A549 (cell line): ENCODE measurements at regions of chr3 and their contacts with region 1.

Region 1: GRCh38 chr3:119145500-119146191 is at the start of gene TEX55:
- DNase-seq: peak; percentile 54 to 77
- ATAC-seq: peak; percentile 86 to 90
- H3K4me3 ChIP-seq: no peak within 1 kb of the TSS
- H3K27ac ChIP-seq: peak within 1 kb of the TSS; percentile 63 to 75
- H3K4me1 ChIP-seq: peaks cover 33% of the 10 kb centered on the region
- CTCF ChIP-seq: peak; percentile 63
- EP300 ChIP-seq: no peak
- POLR2A ChIP-seq: no peak
- RAD21 ChIP-seq: peak; percentile 78 to 82
- polyA plus RNA-seq, gene TEX55: 0.08 TPM in 1 of 2 replicates, not detected in the other

Region 2: DNA sequence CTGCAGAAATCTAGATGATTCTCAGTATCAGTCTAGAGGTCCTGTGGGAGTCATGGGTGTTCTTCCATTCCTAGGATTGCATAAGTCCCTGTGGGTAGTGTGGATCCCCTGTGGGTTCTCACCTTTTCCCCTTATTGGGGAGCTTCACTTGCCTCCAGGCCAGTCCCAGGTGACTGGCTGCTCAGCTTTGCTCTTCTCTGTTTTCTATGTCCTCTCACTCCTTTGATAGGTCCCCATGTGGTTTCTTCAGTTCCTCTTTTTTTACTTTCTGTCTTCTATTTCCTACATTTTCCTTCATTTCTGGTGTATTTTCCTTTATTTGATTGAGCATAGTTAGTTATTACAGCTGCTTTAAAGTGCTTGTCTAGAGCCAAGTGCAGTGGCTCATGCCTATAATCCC is 11.2 kb after region 1 on chr3:
- CTCF ChIA-PET with region 1: interaction called, 12 read pairs
- POLR2A ChIA-PET with region 1: no interaction called
- DNase-seq: no peak
- ATAC-seq: no peak
- H3K4me3 ChIP-seq: no peak overlapping the region
- H3K27ac ChIP-seq: no peak overlapping the region
- H3K4me1 ChIP-seq: peaks cover 7% of the 10 kb centered on the region; the same call in 1 of the 3 replicates
- CTCF ChIP-seq: no peak
- EP300 ChIP-seq: no peak
- POLR2A ChIP-seq: no peak
- RAD21 ChIP-seq: no peak

Region 3: DNA sequence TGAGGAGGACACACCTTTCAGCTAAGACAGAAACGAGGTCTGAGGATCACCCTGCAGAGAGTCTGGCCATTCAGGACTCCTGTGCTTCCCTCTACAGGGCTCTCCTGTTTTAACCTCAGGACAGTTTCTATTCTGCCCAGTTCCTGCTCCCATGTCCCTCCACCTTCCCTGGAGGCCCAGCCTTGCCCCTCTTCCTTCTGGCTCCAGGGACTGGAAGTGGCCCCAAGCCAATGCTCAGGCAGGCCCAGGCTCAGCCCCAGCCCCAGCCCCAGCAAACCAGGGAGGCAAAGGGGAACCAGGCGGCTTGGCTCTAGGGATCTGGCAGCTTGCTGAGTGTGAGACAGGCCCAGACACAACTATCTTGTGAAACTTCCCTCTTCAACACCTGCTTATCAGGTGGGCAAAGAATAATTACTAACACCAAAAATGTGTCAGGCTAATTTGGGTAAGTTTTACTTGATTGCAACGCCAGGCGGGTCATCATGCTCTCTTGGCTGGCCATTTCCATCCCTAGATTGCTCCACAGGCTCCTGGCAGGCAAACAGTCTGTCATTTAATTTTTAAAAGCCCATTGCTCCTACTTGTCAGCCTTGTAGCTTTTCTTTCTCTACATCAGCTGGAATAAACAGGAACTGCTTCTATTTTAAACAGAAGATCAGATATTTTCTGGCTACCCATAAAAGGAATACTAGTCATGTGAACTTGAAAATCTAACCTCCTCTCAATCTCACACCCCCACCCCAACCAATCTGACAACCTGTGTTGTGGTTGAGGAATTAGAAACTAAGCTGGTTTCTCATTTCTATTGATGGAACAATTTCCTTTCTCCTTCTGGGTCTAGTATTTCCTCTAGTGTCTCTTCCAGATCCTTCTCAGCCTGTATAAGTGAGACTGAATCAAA is 61.2 kb after region 1 on chr3:
- CTCF ChIA-PET with region 1: interaction called, 10 read pairs
- POLR2A ChIA-PET with region 1: no interaction called
- DNase-seq: peak; percentile 66 to 85
- ATAC-seq: peak; percentile 81 to 82
- H3K4me3 ChIP-seq: no peak overlapping the region
- H3K27ac ChIP-seq: peak overlapping the region; percentile 90 to 91
- H3K4me1 ChIP-seq: peaks cover 79% of the 10 kb centered on the region
- CTCF ChIP-seq: peak; percentile 29; the same call in 2 of the 3 replicates
- EP300 ChIP-seq: no peak
- POLR2A ChIP-seq: no peak
- RAD21 ChIP-seq: peak; percentile 49 to 60